MCF 10A (cell line): ENCODE measurements at regions of chr18 and their contacts with region 1.

Region 1: GRCh38 chr18:55425698-55426097 is 162.3 kb downstream of the TCF4 start:
- DNase-seq: no peak
- H3K4me3 Mint-ChIP-seq: no peak overlapping the region
- H3K27ac Mint-ChIP-seq: no peak overlapping the region
- H3K4me1 Mint-ChIP-seq: no peaks in the 10 kb centered on the region
- H3K27me3 Mint-ChIP-seq: no peaks in the 10 kb centered on the region
- CTCF ChIP-seq: no peak

Region 2: DNA sequence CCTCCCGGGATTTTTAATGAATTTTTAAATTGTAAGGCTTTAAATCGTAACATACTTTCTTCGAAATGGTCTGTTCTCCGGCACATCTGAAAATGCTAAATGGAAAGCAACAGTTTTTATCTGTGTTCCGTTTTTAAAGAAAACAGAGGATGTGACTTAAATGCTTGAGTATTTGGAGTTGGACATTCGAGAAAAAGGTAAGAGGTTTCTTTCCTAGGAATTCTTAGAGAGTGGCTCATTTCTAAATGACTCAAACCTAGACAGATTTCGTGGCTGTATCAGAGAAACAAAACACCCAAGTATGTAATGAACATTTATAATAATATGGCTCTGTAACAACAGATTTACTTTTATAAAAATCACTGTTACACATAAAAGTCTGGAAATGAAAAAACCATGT is 288.8 kb before region 1 on chr18:
- CTCF ChIA-PET with region 1: no interaction called
- POLR2A ChIA-PET with region 1: no interaction called
- intact Hi-C with region 1: loop called (anchors 5 kb)
- DNase-seq: no peak
- H3K4me3 Mint-ChIP-seq: no peak overlapping the region
- H3K27ac Mint-ChIP-seq: no peak overlapping the region
- H3K4me1 Mint-ChIP-seq: peaks cover 6% of the 10 kb centered on the region
- H3K27me3 Mint-ChIP-seq: no peaks in the 10 kb centered on the region
- CTCF ChIP-seq: no peak

Region 3: DNA sequence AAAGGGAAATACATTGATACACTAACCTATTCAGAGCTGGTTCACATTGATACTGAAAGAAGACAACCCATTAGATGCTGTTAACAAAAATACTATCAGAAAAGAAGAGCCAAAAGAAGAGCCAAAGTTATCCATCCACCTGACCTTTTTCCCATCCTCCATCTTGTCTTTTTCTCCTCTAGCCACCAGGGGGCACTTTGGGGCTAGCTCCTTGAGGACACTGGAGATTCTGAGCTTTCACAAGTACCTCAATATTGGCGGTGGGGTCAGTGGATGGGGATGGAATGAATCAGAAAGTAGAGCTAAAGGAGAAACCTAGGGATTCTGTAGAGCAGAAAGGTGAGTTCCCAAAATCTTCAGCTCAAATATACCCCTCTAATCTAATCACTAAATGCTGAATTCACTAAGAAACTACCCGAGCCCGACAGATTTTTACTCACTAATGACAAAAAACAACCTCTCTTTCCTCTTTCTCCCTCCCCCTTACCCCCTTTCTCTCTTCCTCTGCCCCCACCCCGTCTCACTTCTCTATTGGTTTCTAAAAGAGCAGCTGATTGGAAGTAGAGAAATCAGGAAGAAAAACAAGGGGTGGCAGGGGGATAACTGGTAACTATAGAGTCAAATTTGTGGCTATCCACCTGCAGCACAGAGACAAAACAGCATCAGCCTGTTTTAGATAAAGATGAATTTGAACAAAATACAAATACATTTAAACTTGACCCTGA is 41.0 kb before region 1 on chr18:
- CTCF ChIA-PET with region 1: no interaction called
- POLR2A ChIA-PET with region 1: no interaction called
- intact Hi-C with region 1: no loop called
- DNase-seq: peak; percentile 62
- H3K4me3 Mint-ChIP-seq: no peak overlapping the region
- H3K27ac Mint-ChIP-seq: no peak overlapping the region
- H3K4me1 Mint-ChIP-seq: no peaks in the 10 kb centered on the region
- H3K27me3 Mint-ChIP-seq: no peaks in the 10 kb centered on the region
- CTCF ChIP-seq: peak; percentile 45

Region 4: GRCh38 chr18:55452123-55452611 is 26.5 kb after region 1 on chr18:
- CTCF ChIA-PET with region 1: no interaction called
- POLR2A ChIA-PET with region 1: no interaction called
- intact Hi-C with region 1: no loop called
- DNase-seq: peak; percentile 68
- H3K4me3 Mint-ChIP-seq: no peak overlapping the region
- H3K27ac Mint-ChIP-seq: peak overlapping the region; percentile 74
- H3K4me1 Mint-ChIP-seq: peaks cover 11% of the 10 kb centered on the region
- H3K27me3 Mint-ChIP-seq: no peaks in the 10 kb centered on the region
- CTCF ChIP-seq: no peak